Activated T-helper 1 cell treated with anti-CD3 and anti-CD28 coated beads, Interleukin-12 subunit alpha, Interleukin-12 subunit beta, Interleukin-2, Interleukin-4 antibody, amounts not matched to agents 30 ng/mL and 10 ng/mL and 1 ng/mL, durations not matched to agents 14 hours and 24 hours and 36 hours (primary cell): ENCODE measurements at regions of chr16 and their contacts with region 1.

Region 1: DNA sequence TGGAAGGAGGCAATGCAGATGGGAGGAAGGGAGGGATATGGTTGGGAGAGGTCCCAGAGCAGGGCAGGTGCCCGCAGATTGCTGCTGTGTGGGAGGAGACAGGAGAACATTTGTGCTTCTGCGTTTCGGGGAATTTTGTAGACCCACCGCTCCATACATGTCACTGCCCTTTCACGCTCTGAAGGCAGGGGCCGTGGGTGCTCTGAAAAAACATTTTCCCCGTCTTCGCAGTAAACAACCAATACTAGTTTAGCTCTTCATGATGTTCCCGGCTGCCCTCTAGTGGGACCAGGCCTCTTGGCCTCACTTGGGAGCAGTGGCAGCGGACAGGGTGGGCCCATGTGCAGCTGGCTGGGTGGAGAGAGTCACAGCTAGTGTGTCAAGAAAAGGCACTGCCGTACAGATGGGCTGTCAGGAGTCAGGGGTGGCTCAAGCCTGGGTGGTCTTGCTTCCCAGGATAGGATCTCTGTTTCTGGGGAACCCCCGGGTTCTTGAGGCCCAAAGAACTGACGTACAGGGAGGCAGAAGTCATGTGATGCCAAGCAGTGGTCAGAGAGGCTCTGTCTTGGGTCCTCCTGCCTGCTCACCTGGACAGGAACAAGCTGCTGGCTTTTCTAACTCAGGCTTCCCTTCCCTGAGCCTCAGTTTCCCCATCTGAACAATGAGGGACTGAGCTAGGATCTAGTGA is 46.5 kb upstream of the CPNE2 start:
- DNase-seq: no peak
- H3K4me3 Mint-ChIP-seq: no peak overlapping the region
- H3K27ac Mint-ChIP-seq: peak overlapping the region; percentile 72
- H3K4me1 Mint-ChIP-seq: peaks cover 29% of the 10 kb centered on the region
- H3K27me3 Mint-ChIP-seq: no peaks in the 10 kb centered on the region

Region 2: GRCh38 chr16:56729735-56730662 is 315.8 kb before region 1 on chr16 and contains the start of gene NUP93:
- intact Hi-C with region 1: loop called (anchors 5 kb)
- DNase-seq: peak; percentile 87
- H3K4me3 Mint-ChIP-seq: no peak within 1 kb of the TSS
- H3K27ac Mint-ChIP-seq: peak within 1 kb of the TSS; percentile 88
- H3K4me1 Mint-ChIP-seq: peaks cover 13% of the 10 kb centered on the region
- H3K27me3 Mint-ChIP-seq: peaks cover 2% of the 10 kb centered on the region
- total RNA-seq, gene NUP93: 150 and 152 TPM in 2 replicates

Region 3: DNA sequence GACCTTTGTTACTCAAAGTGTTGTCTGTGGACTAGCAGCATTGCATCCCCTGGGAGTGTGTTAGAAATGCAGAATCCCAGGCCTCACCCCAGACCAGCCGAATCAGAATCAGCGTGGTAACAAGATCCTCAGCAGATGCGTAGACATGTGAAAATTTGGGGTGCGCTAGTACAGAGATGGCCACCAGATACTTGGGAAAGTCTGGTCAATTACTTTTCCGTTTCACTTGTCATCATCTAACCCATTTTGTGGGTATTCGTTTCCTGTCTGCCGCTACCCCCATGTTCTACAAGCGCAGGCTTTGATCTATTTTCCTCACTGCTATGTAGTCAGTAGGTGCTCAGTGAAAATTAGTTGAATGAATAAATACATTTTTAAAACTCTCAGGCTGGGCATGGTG is 147.0 kb before region 1 on chr16:
- intact Hi-C with region 1: no loop called
- DNase-seq: no peak
- H3K4me3 Mint-ChIP-seq: no peak overlapping the region
- H3K27ac Mint-ChIP-seq: no peak overlapping the region
- H3K4me1 Mint-ChIP-seq: peaks cover 15% of the 10 kb centered on the region
- H3K27me3 Mint-ChIP-seq: peaks cover 20% of the 10 kb centered on the region

Region 4: DNA sequence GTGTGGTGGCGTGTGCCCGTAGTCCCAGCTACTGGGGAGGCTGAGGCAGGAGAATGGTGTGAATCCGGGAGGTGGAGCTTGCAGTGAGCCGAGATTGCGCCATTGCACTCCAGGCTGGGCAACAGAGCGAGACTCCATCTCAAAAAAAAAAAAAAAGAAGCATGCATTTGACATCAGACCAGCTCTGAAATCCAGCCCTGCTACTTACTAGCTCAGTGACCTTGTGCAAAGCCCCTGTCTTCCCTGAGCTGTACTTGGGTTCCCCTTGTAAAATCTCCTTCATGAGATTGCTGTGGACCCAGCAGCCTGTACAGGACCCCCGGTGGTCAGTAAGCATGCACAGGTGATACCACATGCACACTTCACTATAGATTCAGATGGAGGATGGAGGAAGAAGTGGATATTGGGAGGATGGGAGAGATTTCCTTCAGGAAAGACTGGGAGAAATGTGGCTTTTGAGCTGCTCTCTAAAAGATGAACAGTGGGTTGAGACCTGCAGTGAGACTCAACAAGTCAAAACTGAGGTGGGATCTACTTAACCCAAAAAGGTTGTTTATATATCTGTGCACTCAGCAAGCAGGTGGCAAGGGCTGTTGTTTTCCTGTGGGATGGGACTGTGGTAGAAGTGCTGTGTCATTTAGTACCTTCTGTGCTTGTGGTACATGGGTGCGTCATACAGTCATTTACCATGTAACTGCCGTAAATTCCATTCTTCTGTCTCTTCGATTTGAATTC is 107.2 kb before region 1 on chr16:
- intact Hi-C with region 1: loop called (anchors 1 kb)
- DNase-seq: peak; percentile 48
- H3K4me3 Mint-ChIP-seq: peak overlapping the region; percentile 85
- H3K27ac Mint-ChIP-seq: peak overlapping the region; percentile 97
- H3K4me1 Mint-ChIP-seq: peaks cover 81% of the 10 kb centered on the region
- H3K27me3 Mint-ChIP-seq: no peaks in the 10 kb centered on the region

Region 5: GRCh38 chr16:56964243-56965148 is 81.3 kb before region 1 on chr16:
- intact Hi-C with region 1: loop called (anchors 1 kb)
- DNase-seq: peak; percentile 89
- H3K4me3 Mint-ChIP-seq: no peak overlapping the region
- H3K27ac Mint-ChIP-seq: peak overlapping the region; percentile 59
- H3K4me1 Mint-ChIP-seq: peaks cover 23% of the 10 kb centered on the region
- H3K27me3 Mint-ChIP-seq: peaks cover 1% of the 10 kb centered on the region

Region 6: GRCh38 chr16:57013229-57013628 is 32.6 kb before region 1 on chr16:
- intact Hi-C with region 1: loop called (anchors 1 kb)
- DNase-seq: no peak
- H3K4me3 Mint-ChIP-seq: peak overlapping the region; percentile 50
- H3K27ac Mint-ChIP-seq: peak overlapping the region; percentile 81
- H3K4me1 Mint-ChIP-seq: peaks cover 80% of the 10 kb centered on the region
- H3K27me3 Mint-ChIP-seq: no peaks in the 10 kb centered on the region